ENCODE measurements at regions of chr3 and their contacts with region 1.

Region 1: DNA sequence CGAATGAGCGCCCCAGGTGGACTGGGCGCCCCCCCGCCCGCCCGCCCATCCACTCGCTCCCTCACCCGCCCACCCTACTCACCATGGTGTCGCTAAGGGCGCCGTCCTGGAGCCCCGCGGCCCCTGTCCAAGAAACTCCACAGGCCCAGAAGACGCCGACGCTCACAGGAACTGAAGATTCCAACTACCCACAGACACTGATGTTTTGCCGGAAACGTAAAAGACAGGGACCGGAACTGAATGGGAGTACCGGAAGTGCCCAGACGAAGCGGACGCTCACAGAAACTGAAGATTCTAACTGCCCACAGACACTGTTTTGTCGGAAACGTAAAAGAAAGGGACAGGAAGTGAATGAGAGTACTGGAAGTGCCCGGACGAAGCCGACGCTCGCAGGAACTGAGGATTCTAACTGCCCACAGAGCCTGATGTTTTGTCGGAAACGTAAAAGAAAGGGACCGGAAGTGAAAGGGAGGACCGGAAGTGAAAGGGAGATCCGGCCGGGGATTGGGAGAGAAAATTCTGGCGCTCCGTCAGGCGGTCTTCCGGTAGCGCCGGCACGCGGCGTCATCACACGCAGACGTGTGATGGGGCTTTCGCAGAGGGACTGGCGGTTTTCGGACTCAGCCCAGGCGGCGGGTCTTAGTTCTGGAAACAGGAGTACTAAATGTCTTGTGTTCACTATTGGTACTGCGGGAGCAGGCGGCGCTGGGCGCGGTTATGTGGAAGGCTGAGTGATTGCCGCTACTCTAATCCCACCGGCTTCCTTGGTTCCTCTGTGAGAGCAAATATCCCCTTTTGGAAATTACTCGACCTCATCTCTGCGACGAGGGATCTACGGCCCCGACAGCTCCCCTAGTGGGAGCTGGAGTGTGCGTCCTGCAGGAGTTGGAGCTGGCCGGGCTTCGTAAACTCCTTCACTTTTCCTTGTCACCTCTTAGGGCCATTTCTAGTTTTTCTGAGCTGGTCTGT is at the start of gene ISY1:
- DNase-seq: peak; percentile 87
- ATAC-seq: peak; percentile 87
- H3K4me3 ChIP-seq: peak within 1 kb of the TSS; percentile 99
- H3K27ac ChIP-seq: peak within 1 kb of the TSS; percentile 100
- H3K4me1 ChIP-seq: peaks cover 4% of the 10 kb centered on the region
- H3K27me3 ChIP-seq: no peaks in the 10 kb centered on the region
- CTCF ChIP-seq: peak; percentile 79 to 86 (median 80)
- EP300 ChIP-seq: peak in 1 of 2 experiments; percentile 61; a peak in 2 of 4 replicates
- POLR2A ChIP-seq: peak; percentile 94
- RAD21 ChIP-seq: peak; percentile 54
- polyA plus RNA-seq, gene ISY1: 54.1 to 58.2 TPM

Region 2: GRCh38 chr3:129120254-129121004 is 40.7 kb before region 1 on chr3:
- CTCF ChIA-PET with region 1: interaction called, 4 read pairs
- POLR2A ChIA-PET with region 1: interaction called, 6 read pairs
- RAD21 ChIA-PET with region 1: interaction called, 5 read pairs
- SMC1A ChIA-PET with region 1: interaction called, 7 read pairs
- in situ Hi-C with region 1: no loop called
- intact Hi-C with region 1: loop called (anchors 1 kb)
- DNase-seq: peak; percentile 89
- ATAC-seq: peak; percentile 82
- H3K4me3 ChIP-seq: peak overlapping the region; percentile 65
- H3K27ac ChIP-seq: peak overlapping the region; percentile 97
- H3K4me1 ChIP-seq: peaks cover 27% of the 10 kb centered on the region
- H3K27me3 ChIP-seq: no peaks in the 10 kb centered on the region
- CTCF ChIP-seq: peak; percentile 13 to 19 (median 18); a peak in 4 of 6 replicates
- EP300 ChIP-seq: no peak
- POLR2A ChIP-seq: peak; percentile 82
- RAD21 ChIP-seq: 0 out of 2 replicates have a peak, but pooled peaks have one; percentile 27

Region 3: GRCh38 chr3:129176051-129176450 is 14.9 kb after region 1 on chr3:
- CTCF ChIA-PET with region 1: interaction called, 22 read pairs
- POLR2A ChIA-PET with region 1: interaction called, 17 read pairs
- RAD21 ChIA-PET with region 1: interaction called, 3 read pairs
- SMC1A ChIA-PET with region 1: interaction called, 8 read pairs
- in situ Hi-C with region 1: no loop called
- intact Hi-C with region 1: no loop called
- DNase-seq: no peak
- ATAC-seq: no peak
- H3K4me3 ChIP-seq: no peak overlapping the region
- H3K27ac ChIP-seq: no peak overlapping the region
- H3K4me1 ChIP-seq: peaks cover 9% of the 10 kb centered on the region
- H3K27me3 ChIP-seq: no peaks in the 10 kb centered on the region
- CTCF ChIP-seq: no peak
- EP300 ChIP-seq: no peak
- POLR2A ChIP-seq: no peak
- RAD21 ChIP-seq: no peak

Region 4: GRCh38 chr3:129183569-129184395 is 22.6 kb after region 1 on chr3 and contains the start of gene CNBP:
- CTCF ChIA-PET with region 1: interaction called, 22 read pairs
- POLR2A ChIA-PET with region 1: interaction called, 17 read pairs
- RAD21 ChIA-PET with region 1: interaction called, 3 read pairs
- SMC1A ChIA-PET with region 1: interaction called, 8 read pairs
- in situ Hi-C with region 1: no loop called
- intact Hi-C with region 1: loop called (anchors 1 kb)
- DNase-seq: peak; percentile 65
- ATAC-seq: peak; percentile 97
- H3K4me3 ChIP-seq: peak within 1 kb of the TSS; percentile 97
- H3K27ac ChIP-seq: peak within 1 kb of the TSS; percentile 97
- H3K4me1 ChIP-seq: peaks cover 9% of the 10 kb centered on the region
- H3K27me3 ChIP-seq: no peaks in the 10 kb centered on the region
- CTCF ChIP-seq: no peak
- EP300 ChIP-seq: no peak
- POLR2A ChIP-seq: peak; percentile 98
- RAD21 ChIP-seq: no peak
- polyA plus RNA-seq, gene CNBP: 618 to 719 TPM

Measured in GM12878 (cell line).